RWPE1 (cell line): ENCODE measurements at regions of chr1 and their contacts with region 1.

Region 1: GRCh38 chr1:109984456-109985275 is at the start of gene AHCYL1:
- DNase-seq: peak; percentile 99
- H3K27ac ChIP-seq: peak within 1 kb of the TSS; percentile 85
- CTCF ChIP-seq: peak; percentile 95

Region 2: DNA sequence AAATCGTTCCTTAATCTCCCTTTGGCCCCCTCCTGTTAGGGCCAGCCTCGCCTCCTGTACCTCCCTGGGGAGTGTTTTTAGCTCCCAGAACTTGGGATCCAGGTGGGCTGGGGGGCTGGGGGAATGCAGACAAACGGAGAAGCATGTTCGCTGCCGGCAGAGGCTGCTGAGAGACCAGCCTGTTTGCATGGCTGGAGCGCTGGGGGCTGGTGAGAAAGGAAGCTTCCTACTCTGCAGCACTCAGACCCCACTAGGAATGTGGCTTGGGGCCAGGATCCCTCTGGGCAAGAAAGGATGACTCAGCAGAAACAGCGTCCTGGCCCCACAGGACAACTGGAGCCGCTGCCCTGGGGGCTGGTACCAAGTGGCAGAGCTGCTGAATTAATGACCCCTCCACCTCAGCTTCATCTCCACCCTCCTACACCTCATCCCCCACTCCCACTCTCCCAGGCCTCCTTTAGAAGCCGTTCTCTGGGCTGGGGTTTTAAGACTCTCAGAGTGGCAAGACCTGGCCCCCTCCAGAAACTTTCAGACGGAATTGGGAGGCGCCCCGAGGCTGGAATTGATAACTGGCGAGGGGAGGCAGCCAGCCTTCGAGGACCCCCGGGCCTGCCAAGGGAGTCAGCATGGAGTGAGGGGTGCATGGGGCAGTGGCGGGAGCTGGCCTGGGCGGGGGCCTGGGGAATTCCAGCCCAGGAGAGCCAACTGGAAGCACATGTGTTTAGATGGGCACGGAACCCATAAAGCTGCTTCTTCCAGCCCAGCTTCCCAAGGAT is 192.4 kb before region 1 on chr1:
- CTCF ChIA-PET with region 1: interaction called, 19 read pairs
- POLR2A ChIA-PET with region 1: no interaction called
- DNase-seq: peak; percentile 54
- H3K27ac ChIP-seq: peak overlapping the region; percentile 70
- CTCF ChIP-seq: no peak